T-cell (primary cell): ENCODE measurements at regions of chr3 and their contacts with region 1.

Region 1: DNA sequence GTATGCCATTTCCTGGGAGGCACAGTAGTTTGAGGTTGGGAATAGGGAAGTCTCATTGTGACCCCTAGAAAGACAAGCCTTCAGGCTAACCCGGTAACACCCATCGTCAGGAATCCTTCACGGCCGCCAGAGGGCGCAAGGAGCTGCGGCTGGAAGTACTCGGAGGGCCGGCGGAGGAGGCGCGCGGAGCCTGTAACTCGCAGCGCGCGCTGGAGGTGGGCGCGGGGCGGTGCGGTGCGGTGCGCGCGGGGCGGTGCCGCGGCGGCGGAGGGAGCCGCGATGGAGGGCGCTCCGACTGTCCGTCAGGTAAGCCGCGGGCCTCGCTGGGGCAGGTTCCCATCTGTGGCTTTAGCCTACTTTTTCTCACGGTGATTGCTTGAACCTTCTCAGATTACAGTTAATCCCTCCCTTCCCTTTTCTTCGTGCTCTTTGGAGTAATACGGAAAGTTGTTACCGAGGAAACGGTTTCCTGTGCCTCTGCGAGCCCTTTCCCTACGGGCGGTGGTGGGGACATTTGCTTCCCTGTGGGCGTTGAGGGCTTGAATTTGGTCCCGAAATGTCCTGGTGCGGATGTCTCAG is at the start of gene GRAMD1C:
- DNase-seq: peak; percentile 59 to 95 (median 81)
- ATAC-seq: peak; percentile 98 to 99 (median 99)
- H3K4me3 ChIP-seq: peak within 1 kb of the TSS; percentile 48 to 68
- H3K4me3 Mint-ChIP-seq: peak within 1 kb of the TSS; percentile 75 to 77 (median 76)
- H3K27ac ChIP-seq: no peak within 1 kb of the TSS
- H3K27ac Mint-ChIP-seq: no peak within 1 kb of the TSS
- H3K4me1 ChIP-seq: peaks cover 0 to 10% of the 10 kb centered on the region in 2 experiments
- H3K4me1 Mint-ChIP-seq: peaks cover 7 to 9% (median 8%) of the 10 kb centered on the region in 3 donors
- H3K27me3 ChIP-seq: peaks cover 0 to 3% of the 10 kb centered on the region in 2 experiments
- H3K27me3 Mint-ChIP-seq: no peaks in the 10 kb centered on the region
- total RNA-seq, gene GRAMD1C: 0.43 to 2.7 (median 1.4) TPM

Region 2: GRCh38 chr3:113736548-113737089 is 102.1 kb before region 1 on chr3:
- CTCF ChIA-PET with region 1: interaction called, 9 to 21 read pairs
- POLR2A ChIA-PET with region 1: no interaction called
- DNase-seq: peak in 10 of 35 experiments; percentile 5 to 84 (median 24)
- ATAC-seq: peak; percentile 73 to 85 (median 76)
- H3K4me3 ChIP-seq: no peak overlapping the region
- H3K4me3 Mint-ChIP-seq: no peak overlapping the region
- H3K27ac ChIP-seq: peak overlapping the region; percentile 16
- H3K27ac Mint-ChIP-seq: peak overlapping the region; percentile 70 to 77
- H3K4me1 ChIP-seq: peaks cover 5 to 7% of the 10 kb centered on the region in 2 experiments
- H3K4me1 Mint-ChIP-seq: peaks cover 44 to 73% (median 73%) of the 10 kb centered on the region in 3 donors
- H3K27me3 ChIP-seq: no peaks in the 10 kb centered on the region
- H3K27me3 Mint-ChIP-seq: no peaks in the 10 kb centered on the region

Region 3: DNA sequence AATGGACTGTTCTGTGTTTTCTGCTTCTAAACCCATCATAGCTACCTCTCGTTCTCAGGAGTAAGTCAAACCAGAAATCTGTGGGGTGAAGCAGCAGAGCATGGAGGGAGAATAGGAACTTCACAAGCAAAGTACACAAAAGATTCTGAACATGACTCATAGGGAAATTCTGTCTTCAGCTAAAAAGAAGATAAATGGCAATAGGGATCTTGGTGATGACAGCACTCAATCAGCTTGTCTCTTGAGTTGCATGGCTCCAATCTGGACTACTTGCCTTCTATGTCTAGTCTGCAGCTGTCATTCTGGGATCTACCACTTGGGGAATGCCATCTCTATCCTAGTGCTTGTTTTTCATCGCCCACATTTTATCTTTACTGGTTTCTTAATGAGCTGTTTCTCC is 13.6 kb before region 1 on chr3:
- CTCF ChIA-PET with region 1: interaction called, 4 to 7 read pairs
- POLR2A ChIA-PET with region 1: interaction called in 1 of 2 experiments, 11 read pairs
- DNase-seq: no peak
- ATAC-seq: no peak
- H3K4me3 ChIP-seq: no peak overlapping the region
- H3K4me3 Mint-ChIP-seq: no peak overlapping the region
- H3K27ac ChIP-seq: no peak overlapping the region
- H3K27ac Mint-ChIP-seq: no peak overlapping the region
- H3K4me1 ChIP-seq: no peaks in the 10 kb centered on the region
- H3K4me1 Mint-ChIP-seq: peaks cover 0 to 10% (median 4%) of the 10 kb centered on the region in 3 donors
- H3K27me3 ChIP-seq: no peaks in the 10 kb centered on the region
- H3K27me3 Mint-ChIP-seq: peaks cover 0 to 1% of the 10 kb centered on the region in 2 donors